CD8-positive, alpha-beta T cell (primary cell): ENCODE measurements at regions of chr13 and their contacts with region 1.

Region 1: DNA sequence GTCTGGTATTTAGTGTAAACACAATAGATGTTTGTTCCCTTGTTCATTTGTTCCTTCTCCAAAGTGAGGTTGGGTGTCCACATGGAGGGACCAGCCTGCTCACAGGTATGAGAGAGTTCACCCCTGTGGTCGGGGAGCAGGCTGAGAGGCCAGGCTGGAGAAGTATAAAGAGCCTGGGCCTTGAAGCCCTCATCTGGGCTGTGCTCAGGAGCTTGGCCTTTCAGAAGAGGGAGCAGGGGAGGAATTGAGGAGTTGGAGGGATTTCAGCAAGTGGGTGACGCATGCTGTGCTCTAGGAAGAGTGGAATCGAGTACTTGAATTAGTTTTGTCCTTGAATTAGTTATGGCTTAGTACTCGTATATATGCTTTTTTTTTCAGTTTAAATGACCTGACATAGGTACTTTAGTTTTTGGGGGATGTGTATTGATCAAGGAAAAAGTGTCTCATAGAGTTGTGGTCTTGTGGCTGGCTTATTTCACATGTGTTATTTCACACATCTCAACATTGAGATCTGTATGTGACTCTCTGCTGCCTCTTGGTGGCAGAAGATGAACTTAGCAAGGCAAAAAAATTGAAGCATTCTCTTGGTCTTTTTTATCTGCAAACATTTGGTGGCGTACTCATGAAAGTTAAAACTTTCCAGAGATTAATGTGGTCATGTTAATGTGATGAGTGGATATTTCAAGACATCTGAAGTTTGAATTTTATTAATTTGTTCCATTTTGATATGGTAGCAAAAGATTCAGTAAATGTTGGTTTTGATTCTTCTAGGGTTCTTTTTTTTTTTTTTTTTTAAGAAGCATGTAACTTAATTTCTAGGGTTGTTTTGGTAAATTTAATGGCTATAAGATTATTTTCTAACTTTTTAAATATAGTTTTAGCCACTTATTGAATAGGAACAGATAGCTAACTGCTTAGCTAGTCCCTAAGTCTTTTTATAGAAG is 54.3 kb downstream of the SLAIN1 start:
- DNase-seq: peak in 8 of 9 experiments; percentile 12 to 80 (median 38)
- ATAC-seq: peak; percentile 94
- H3K4me3 ChIP-seq: no peak overlapping the region
- H3K4me3 Mint-ChIP-seq: no peak overlapping the region
- H3K27ac ChIP-seq: no peak overlapping the region
- H3K27ac Mint-ChIP-seq: no peak overlapping the region
- H3K4me1 ChIP-seq: no peaks in the 10 kb centered on the region
- H3K4me1 Mint-ChIP-seq: peaks cover 20% of the 10 kb centered on the region
- H3K27me3 ChIP-seq: no peaks in the 10 kb centered on the region
- H3K27me3 Mint-ChIP-seq: no peaks in the 10 kb centered on the region
- CTCF ChIP-seq: peak; percentile 93

Region 2: GRCh38 chr13:77274126-77274525 is 477.7 kb before region 1 on chr13:
- CTCF ChIA-PET with region 1: no interaction called
- POLR2A ChIA-PET with region 1: no interaction called
- intact Hi-C with region 1: loop called in 1 of 2 experiments (anchors 5 kb)
- DNase-seq: peak in 1 of 9 experiments; percentile 20
- ATAC-seq: no peak
- H3K4me3 ChIP-seq: no peak overlapping the region
- H3K4me3 Mint-ChIP-seq: no peak overlapping the region
- H3K27ac ChIP-seq: no peak overlapping the region
- H3K27ac Mint-ChIP-seq: peak overlapping the region; percentile 66
- H3K4me1 ChIP-seq: no peaks in the 10 kb centered on the region
- H3K4me1 Mint-ChIP-seq: peaks cover 17% of the 10 kb centered on the region
- H3K27me3 ChIP-seq: no peaks in the 10 kb centered on the region
- H3K27me3 Mint-ChIP-seq: no peaks in the 10 kb centered on the region
- CTCF ChIP-seq: peak; percentile 18

Region 3: DNA sequence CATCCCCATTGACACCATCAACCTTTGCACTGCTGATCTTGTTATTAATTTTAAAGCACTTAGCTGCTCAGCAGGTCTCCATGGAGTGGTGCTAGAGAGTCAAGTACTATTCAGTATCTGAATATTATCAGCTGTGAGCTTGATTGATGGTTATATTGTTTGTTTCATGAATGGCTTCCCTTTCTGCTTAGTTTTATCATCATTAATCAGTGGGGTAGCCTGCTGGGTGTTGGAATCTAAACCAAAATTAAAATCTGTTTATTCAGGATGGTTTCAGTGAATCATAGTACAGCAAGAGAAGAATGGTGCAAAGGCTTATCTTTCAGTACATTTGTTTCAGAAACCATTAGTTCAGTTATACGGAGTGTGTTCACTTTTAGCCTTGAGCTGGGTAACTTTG is 258.8 kb before region 1 on chr13:
- CTCF ChIA-PET with region 1: interaction called, 6 read pairs
- POLR2A ChIA-PET with region 1: no interaction called
- intact Hi-C with region 1: loop called (anchors 1 to 5 kb)
- DNase-seq: peak in 2 of 9 experiments; percentile 13 to 31
- ATAC-seq: no peak
- H3K4me3 ChIP-seq: no peak overlapping the region
- H3K4me3 Mint-ChIP-seq: no peak overlapping the region
- H3K27ac ChIP-seq: no peak overlapping the region
- H3K27ac Mint-ChIP-seq: no peak overlapping the region
- H3K4me1 ChIP-seq: no peaks in the 10 kb centered on the region
- H3K4me1 Mint-ChIP-seq: no peaks in the 10 kb centered on the region
- H3K27me3 ChIP-seq: no peaks in the 10 kb centered on the region
- H3K27me3 Mint-ChIP-seq: peaks cover 3% of the 10 kb centered on the region
- CTCF ChIP-seq: no peak

Region 4: GRCh38 chr13:77599351-77599750 is 152.4 kb before region 1 on chr13:
- CTCF ChIA-PET with region 1: interaction called, 90 read pairs
- POLR2A ChIA-PET with region 1: no interaction called
- intact Hi-C with region 1: no loop called
- DNase-seq: no peak
- ATAC-seq: no peak
- H3K4me3 ChIP-seq: no peak overlapping the region
- H3K4me3 Mint-ChIP-seq: no peak overlapping the region
- H3K27ac ChIP-seq: no peak overlapping the region
- H3K27ac Mint-ChIP-seq: no peak overlapping the region
- H3K4me1 ChIP-seq: no peaks in the 10 kb centered on the region
- H3K4me1 Mint-ChIP-seq: no peaks in the 10 kb centered on the region
- H3K27me3 ChIP-seq: no peaks in the 10 kb centered on the region
- H3K27me3 Mint-ChIP-seq: peaks cover 14% of the 10 kb centered on the region
- CTCF ChIP-seq: no peak

Region 5: DNA sequence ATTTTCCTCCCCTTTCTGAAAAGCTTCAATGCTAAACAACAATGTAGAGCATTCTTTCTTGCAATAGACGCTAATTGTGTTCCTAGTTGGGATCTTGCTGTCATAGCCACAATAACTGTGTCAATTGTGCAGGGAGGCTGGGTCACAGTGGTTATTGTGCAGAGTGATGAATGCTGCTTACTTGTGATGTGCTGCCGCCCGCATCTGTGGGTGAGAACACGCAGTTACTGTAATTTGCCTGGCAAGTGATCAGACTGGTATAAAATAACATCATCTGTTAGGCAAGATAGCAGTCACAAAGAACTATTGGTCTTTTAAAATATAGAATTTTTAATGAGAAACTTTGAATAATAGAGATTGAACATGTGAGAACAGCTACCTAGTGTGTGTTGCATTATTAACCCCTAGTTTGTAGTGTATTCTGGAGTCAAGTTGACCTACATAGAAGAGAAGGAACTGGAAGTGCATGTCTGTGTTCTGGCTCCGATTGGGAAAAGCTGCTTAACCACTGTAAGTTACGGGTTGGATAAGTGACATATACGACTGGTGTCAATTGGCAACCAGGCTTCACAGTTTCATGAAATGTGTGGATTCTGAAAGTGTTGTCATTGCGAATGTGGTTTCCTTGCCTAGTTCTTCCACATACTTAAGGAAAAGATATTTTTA is 10.7 kb before region 1 on chr13:
- CTCF ChIA-PET with region 1: interaction called, 6 read pairs
- POLR2A ChIA-PET with region 1: no interaction called
- intact Hi-C with region 1: loop called in 1 of 2 experiments (anchors 1 kb)
- DNase-seq: peak in 2 of 9 experiments; percentile 30 to 56
- ATAC-seq: no peak
- H3K4me3 ChIP-seq: no peak overlapping the region
- H3K4me3 Mint-ChIP-seq: no peak overlapping the region
- H3K27ac ChIP-seq: no peak overlapping the region
- H3K27ac Mint-ChIP-seq: peak overlapping the region; percentile 10
- H3K4me1 ChIP-seq: no peaks in the 10 kb centered on the region
- H3K4me1 Mint-ChIP-seq: peaks cover 16% of the 10 kb centered on the region
- H3K27me3 ChIP-seq: no peaks in the 10 kb centered on the region
- H3K27me3 Mint-ChIP-seq: no peaks in the 10 kb centered on the region
- CTCF ChIP-seq: no peak

Region 6: GRCh38 chr13:77928909-77929308 is 177.1 kb after region 1 on chr13:
- CTCF ChIA-PET with region 1: no interaction called
- POLR2A ChIA-PET with region 1: no interaction called
- intact Hi-C with region 1: no loop called
- DNase-seq: peak in 1 of 9 experiments; percentile 3
- ATAC-seq: no peak
- H3K4me3 ChIP-seq: no peak overlapping the region
- H3K4me3 Mint-ChIP-seq: no peak overlapping the region
- H3K27ac ChIP-seq: no peak overlapping the region
- H3K27ac Mint-ChIP-seq: no peak overlapping the region
- H3K4me1 ChIP-seq: no peaks in the 10 kb centered on the region
- H3K4me1 Mint-ChIP-seq: no peaks in the 10 kb centered on the region
- H3K27me3 ChIP-seq: peaks cover 0 to 5% of the 10 kb centered on the region in 2 experiments
- H3K27me3 Mint-ChIP-seq: peaks cover 18% of the 10 kb centered on the region
- CTCF ChIP-seq: no peak